Right ventricle myocardium inferior (tissue), 1 donor: ENCODE measurements at regions of chr19 and their contacts with region 1.

Region 1: GRCh38 chr19:32224371-32225244 is 120.8 kb upstream of the ZNF507 start:
- DNase-seq: peak; percentile 80
- ATAC-seq: peak; percentile 93

Region 2: GRCh38 chr19:30669329-30670010 is 1555.1 kb before region 1 on chr19:
- intact Hi-C with region 1: loop called (anchors 5 kb)
- DNase-seq: peak; percentile 84
- ATAC-seq: no peak

Region 3: GRCh38 chr19:31676271-31677004 is 548.2 kb before region 1 on chr19:
- intact Hi-C with region 1: loop called (anchors 2 kb)
- DNase-seq: no peak
- ATAC-seq: no peak